ENCODE measurements at regions of chr2 and their contacts with region 1.

Region 1: DNA sequence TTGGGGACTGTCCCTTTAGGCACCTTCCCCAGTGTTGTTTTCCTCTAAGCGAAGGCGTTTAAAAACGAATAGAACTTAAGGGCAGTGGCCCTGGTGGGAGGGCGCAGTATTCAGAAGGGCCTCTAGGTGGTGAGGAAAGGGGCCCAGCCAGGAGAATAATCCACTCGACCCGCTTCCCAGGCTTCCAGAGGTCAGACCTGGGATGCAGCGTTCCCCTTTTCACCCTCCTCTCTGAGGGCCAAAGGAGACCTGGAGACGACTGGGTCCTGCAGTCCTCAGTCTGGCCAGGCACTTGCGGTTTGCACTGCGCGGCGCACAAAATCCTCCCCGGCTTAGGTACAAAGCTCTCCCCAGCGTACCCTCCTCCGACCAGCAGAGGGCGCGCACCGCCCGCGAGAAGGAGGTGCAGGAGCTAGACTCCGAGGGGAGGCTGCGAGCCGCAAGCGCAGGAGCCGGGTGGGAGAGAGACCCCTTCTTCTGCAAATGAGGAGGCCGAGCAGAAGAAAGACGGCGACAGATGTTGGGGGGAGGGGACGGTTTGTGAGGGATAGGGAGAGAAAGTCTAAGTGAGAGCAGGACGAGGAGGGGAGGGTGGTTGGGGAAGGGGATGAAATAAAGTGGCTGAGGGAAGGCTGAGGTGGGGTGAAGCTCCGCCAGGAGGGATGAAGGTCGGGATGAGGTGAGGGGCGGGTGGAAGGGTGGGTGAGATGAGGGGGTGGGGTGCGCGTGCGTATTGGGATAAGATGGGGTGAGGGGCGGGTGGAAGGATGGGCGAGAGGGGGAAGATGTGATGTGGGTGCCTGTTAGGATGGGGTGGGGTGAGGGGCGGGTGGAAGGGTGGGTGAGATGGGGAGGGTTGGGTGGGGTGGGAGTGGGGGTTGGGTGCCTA is 4.9 kb downstream of the FEV start:
- DNase-seq: peak; percentile 79 to 89
- ATAC-seq: peak; percentile 87 to 96
- H3K4me3 ChIP-seq: peak overlapping the region; percentile 16
- H3K27ac ChIP-seq: peak overlapping the region; percentile 26 to 75; a peak in 4 of 6 replicates
- H3K4me1 ChIP-seq: peaks cover 18% of the 10 kb centered on the region
- CTCF ChIP-seq: peak; percentile 97
- EP300 ChIP-seq: no peak
- POLR2A ChIP-seq: no peak
- RAD21 ChIP-seq: peak; percentile 73 to 76

Region 2: GRCh38 chr2:218885981-218886947 is 93.8 kb before region 1 on chr2:
- CTCF ChIA-PET with region 1: interaction called, 10 read pairs
- POLR2A ChIA-PET with region 1: no interaction called
- DNase-seq: no peak
- ATAC-seq: no peak
- H3K4me3 ChIP-seq: no peak overlapping the region
- H3K27ac ChIP-seq: no peak overlapping the region
- H3K4me1 ChIP-seq: no peaks in the 10 kb centered on the region
- CTCF ChIP-seq: no peak
- EP300 ChIP-seq: no peak
- POLR2A ChIP-seq: no peak
- RAD21 ChIP-seq: no peak

Region 3: GRCh38 chr2:218953481-218953881 is 26.6 kb before region 1 on chr2:
- CTCF ChIA-PET with region 1: interaction called, 140 read pairs
- POLR2A ChIA-PET with region 1: no interaction called
- DNase-seq: no peak
- ATAC-seq: peak in 1 of 2 experiments; percentile 68; a peak in 3 of 6 replicates
- H3K4me3 ChIP-seq: no peak overlapping the region
- H3K27ac ChIP-seq: no peak overlapping the region
- H3K4me1 ChIP-seq: no peaks in the 10 kb centered on the region
- CTCF ChIP-seq: no peak
- EP300 ChIP-seq: no peak
- POLR2A ChIP-seq: no peak
- RAD21 ChIP-seq: 0 out of 5 replicates have a peak, but pooled peaks of 1 of the 2 experiments have one; percentile 7

Region 4: DNA sequence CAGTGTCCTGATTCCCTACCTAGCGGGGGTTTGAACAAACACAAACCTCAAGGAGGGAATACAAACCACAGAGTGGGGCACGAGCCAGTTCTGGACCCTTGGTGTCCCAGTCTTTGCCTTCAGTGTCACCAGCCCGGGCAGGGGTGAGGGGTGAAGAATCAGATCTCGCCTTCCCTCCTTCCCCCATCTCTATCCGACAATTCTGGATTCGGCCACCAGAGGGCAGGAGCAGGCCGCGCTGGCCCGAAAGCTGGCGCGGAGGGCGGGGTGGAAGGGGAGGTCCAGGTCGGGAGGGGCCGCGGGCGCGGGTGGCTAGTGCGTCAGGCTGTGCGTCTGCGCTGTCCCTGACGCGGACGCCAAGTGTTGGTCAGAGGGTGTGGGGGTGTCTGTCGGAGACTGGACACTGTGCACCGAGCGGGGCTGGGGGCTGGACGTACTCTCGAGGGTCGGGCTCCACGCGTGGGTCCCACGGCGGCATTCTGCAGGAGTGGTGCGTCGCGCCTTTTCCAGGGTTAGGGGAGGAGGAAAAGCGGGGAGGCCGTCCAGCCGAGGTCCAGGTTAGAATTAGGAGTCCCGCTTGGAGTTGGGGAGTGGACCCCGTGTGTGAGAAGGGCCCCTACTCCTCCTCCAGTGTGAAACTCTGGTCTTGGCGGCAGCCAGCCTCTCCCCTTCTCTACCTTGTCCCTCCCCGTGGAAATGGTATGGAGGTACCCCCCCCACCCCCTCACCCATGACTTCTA is 16.1 kb after region 1 on chr2:
- CTCF ChIA-PET with region 1: interaction called, 101 read pairs
- POLR2A ChIA-PET with region 1: no interaction called
- DNase-seq: peak; percentile 87
- ATAC-seq: peak; percentile 78 to 93
- H3K4me3 ChIP-seq: peak overlapping the region; percentile 49
- H3K27ac ChIP-seq: peak overlapping the region; percentile 79 to 84
- H3K4me1 ChIP-seq: peaks cover 10% of the 10 kb centered on the region
- CTCF ChIP-seq: peak; percentile 87
- EP300 ChIP-seq: no peak
- POLR2A ChIP-seq: peak; percentile 84
- RAD21 ChIP-seq: peak; percentile 74 to 80

Region 5: GRCh38 chr2:219010162-219010756 is 30.2 kb after region 1 on chr2:
- CTCF ChIA-PET with region 1: interaction called, 59 read pairs
- POLR2A ChIA-PET with region 1: no interaction called
- DNase-seq: peak; percentile 56 to 64
- ATAC-seq: peak; percentile 93 to 96
- H3K4me3 ChIP-seq: no peak overlapping the region
- H3K27ac ChIP-seq: no peak overlapping the region
- H3K4me1 ChIP-seq: no peaks in the 10 kb centered on the region
- CTCF ChIP-seq: peak; percentile 38; the same call in 2 of the 3 replicates
- EP300 ChIP-seq: no peak
- POLR2A ChIP-seq: no peak
- RAD21 ChIP-seq: peak; percentile 32 to 59; a peak in 3 of 5 replicates